Activated CD4-positive, alpha-beta memory T cell treated with anti-CD3 and anti-CD28 coated beads for 36 hours (primary cell): ENCODE measurements at regions of chr5 and their contacts with region 1.

Region 1: GRCh38 chr5:73448463-73449136 is at the start of gene FOXD1:
- DNase-seq: peak; percentile 69
- H3K4me3 Mint-ChIP-seq: peak within 1 kb of the TSS; percentile 75
- H3K27ac Mint-ChIP-seq: peak within 1 kb of the TSS; percentile 51
- H3K4me1 Mint-ChIP-seq: peaks cover 22% of the 10 kb centered on the region
- H3K27me3 Mint-ChIP-seq: peaks cover 70% of the 10 kb centered on the region
- total RNA-seq, gene FOXD1: 0.38 to 0.46 TPM

Region 2: GRCh38 chr5:73088026-73088425 is 360.6 kb before region 1 on chr5:
- CTCF ChIA-PET with region 1: interaction called, 14 read pairs
- POLR2A ChIA-PET with region 1: no interaction called
- intact Hi-C with region 1: loop called (anchors 2 kb)
- DNase-seq: no peak
- H3K4me3 Mint-ChIP-seq: no peak overlapping the region
- H3K27ac Mint-ChIP-seq: no peak overlapping the region
- H3K4me1 Mint-ChIP-seq: no peaks in the 10 kb centered on the region
- H3K27me3 Mint-ChIP-seq: peaks cover 3% of the 10 kb centered on the region

Region 3: GRCh38 chr5:73233347-73234200 is 215.0 kb before region 1 on chr5:
- CTCF ChIA-PET with region 1: interaction called, 3 read pairs
- POLR2A ChIA-PET with region 1: no interaction called
- intact Hi-C with region 1: loop called (anchors 2 kb)
- DNase-seq: no peak
- H3K4me3 Mint-ChIP-seq: no peak overlapping the region
- H3K27ac Mint-ChIP-seq: no peak overlapping the region
- H3K4me1 Mint-ChIP-seq: peaks cover 23% of the 10 kb centered on the region
- H3K27me3 Mint-ChIP-seq: peaks cover 59% of the 10 kb centered on the region

Region 4: DNA sequence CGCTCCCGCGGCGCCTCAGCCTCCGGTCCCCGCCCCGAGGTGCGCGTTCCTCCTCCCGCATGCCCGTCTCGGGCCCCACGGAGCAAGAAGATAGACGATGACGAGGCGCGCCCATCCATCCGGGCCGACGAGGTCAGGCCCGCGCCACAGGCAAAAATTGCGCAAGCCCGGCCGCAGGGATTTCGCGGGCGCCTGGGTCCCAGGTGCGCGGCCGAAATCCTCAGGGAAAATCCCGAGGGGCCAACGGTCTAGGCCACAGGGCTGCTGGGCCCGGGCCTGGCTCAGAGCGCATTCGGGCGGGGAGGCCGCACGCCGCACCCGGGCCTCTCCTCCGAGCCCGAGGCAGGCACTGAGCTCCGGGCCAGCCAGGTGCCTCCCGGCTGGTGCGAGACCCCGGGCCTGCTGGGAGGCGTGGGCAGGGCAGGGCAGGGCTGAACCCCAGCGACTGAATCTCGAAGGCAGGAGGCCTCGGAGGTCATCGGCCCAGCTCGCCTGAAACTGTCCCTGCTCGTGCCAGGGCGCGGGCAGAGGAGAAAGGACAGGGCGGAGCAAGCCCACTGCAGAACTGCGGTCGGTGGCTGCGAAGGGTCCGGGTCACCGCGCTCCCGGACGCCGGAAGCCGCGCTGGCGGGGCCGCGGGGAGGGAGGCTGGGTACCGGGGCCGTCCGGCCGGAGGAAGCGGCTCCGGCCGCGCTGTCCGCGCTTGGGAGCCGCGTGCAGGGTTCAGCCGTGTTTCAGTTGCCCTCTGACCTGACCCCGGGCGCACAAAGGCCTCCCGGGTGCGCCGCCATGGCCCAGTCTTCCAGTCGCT is 66.8 kb before region 1 on chr5:
- CTCF ChIA-PET with region 1: interaction called, 3 read pairs
- POLR2A ChIA-PET with region 1: no interaction called
- intact Hi-C with region 1: loop called (anchors 2 kb)
- DNase-seq: no peak
- H3K4me3 Mint-ChIP-seq: no peak overlapping the region
- H3K27ac Mint-ChIP-seq: no peak overlapping the region
- H3K4me1 Mint-ChIP-seq: peaks cover 23% of the 10 kb centered on the region
- H3K27me3 Mint-ChIP-seq: peaks cover 62% of the 10 kb centered on the region

Region 5: GRCh38 chr5:73405691-73406090 is 42.9 kb before region 1 on chr5:
- CTCF ChIA-PET with region 1: no interaction called
- POLR2A ChIA-PET with region 1: no interaction called
- intact Hi-C with region 1: no loop called
- DNase-seq: no peak
- H3K4me3 Mint-ChIP-seq: no peak overlapping the region
- H3K27ac Mint-ChIP-seq: no peak overlapping the region
- H3K4me1 Mint-ChIP-seq: no peaks in the 10 kb centered on the region
- H3K27me3 Mint-ChIP-seq: peaks cover 17% of the 10 kb centered on the region

Region 6: GRCh38 chr5:73498057-73499008 is 49.7 kb after region 1 on chr5 and contains the start of gene BTF3:
- CTCF ChIA-PET with region 1: interaction called, 9 read pairs
- POLR2A ChIA-PET with region 1: no interaction called
- intact Hi-C with region 1: loop called (anchors 2 kb)
- DNase-seq: peak; percentile 95
- H3K4me3 Mint-ChIP-seq: peak within 1 kb of the TSS; percentile 98
- H3K27ac Mint-ChIP-seq: peak within 1 kb of the TSS; percentile 97
- H3K4me1 Mint-ChIP-seq: peaks cover 37% of the 10 kb centered on the region
- H3K27me3 Mint-ChIP-seq: peaks cover 2% of the 10 kb centered on the region
- total RNA-seq, gene BTF3: 936 to 944 TPM